ENCODE measurements at regions of chr18 and their contacts with region 1.

Region 1: GRCh38 chr18:58511897-58512581 is 116.9 kb downstream of the ALPK2 start:
- DNase-seq: no peak
- ATAC-seq: no peak
- H3K4me3 ChIP-seq: no peak overlapping the region
- H3K27ac ChIP-seq: no peak overlapping the region
- H3K4me1 ChIP-seq: no peaks in the 10 kb centered on the region
- H3K27me3 ChIP-seq: no peaks in the 10 kb centered on the region
- CTCF ChIP-seq: no peak
- POLR2A ChIP-seq: no peak

Region 2: DNA sequence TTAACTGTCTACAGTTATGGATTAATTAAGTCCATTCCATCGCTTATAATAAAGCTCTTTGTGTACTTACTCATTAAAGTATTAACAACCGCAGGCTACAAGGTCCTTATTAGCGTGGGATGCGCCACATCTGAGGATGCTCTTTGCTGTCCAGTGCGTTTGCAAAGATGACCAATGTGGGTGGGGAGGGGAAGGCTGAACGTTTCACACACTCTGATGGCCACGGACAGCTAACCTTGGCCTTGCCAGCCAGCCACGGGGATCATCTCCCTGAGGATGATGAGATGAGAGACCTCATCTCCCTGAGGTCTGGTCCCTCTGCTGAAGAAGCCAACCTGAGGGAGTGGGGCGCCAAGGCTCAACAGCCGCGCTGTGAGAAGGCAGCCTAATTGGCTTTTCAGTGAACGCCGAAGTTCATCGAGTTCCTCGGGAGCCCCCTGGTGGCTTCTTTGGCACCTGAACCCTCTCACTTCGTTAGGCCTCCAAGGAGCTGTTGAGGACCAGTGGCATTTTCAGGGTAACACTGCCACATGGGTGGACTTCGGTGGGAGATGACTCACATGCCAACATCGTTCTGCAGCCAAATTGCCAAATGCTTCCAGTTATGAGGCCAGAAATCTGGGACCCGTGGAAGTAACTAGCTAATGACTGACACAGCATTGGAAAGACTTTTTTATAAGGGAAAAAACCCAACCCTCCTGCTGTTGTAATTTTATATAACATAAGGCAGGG is 558.3 kb after region 1 on chr18:
- intact Hi-C with region 1: loop called in 2 of 10 experiments (anchors 5 to 10 kb)
- DNase-seq: peak; percentile 82 to 87 (median 82)
- ATAC-seq: peak; percentile 70 to 91 (median 88)
- H3K4me3 ChIP-seq: no peak overlapping the region
- H3K27ac ChIP-seq: no peak overlapping the region
- H3K4me1 ChIP-seq: no peaks in the 10 kb centered on the region
- H3K27me3 ChIP-seq: no peaks in the 10 kb centered on the region
- CTCF ChIP-seq: peak; percentile 81 to 94 (median 86)
- POLR2A ChIP-seq: no peak

Region 3: DNA sequence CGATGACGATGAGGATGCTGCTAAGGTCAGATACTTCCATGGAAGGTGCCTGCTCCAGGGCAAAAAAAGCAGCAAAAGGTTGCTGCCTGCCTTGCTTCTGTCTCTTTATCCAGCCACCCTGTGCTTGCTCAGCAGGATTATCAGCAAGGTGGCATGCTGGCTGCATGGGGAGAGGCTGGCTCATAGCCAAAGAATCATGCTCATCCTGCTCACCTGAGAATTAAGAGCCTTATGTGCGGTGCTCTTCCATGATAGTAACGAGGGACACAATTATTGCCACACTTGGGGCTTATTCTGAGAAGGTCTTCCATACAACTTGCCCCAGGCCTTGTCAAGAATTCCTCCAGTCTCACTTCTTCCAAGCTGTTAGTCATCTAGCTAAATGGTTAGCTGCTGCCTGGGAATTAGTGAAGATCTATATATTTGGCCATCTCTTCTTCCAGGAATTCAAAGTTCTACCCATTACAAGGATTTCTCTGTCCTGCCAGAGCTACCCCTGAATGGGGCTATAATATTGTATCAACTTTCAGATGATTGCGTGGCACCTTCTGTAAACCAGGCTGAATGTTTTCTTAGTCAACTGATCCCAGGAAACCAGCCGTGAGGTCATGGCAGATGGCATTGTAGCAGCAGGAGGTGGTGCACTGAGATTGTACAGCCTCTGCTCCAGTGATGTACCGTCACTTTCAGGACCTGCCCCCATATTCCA is 567.4 kb after region 1 on chr18:
- intact Hi-C with region 1: loop called in 2 of 10 experiments (anchors 5 to 10 kb)
- DNase-seq: no peak
- ATAC-seq: no peak
- H3K4me3 ChIP-seq: no peak overlapping the region
- H3K27ac ChIP-seq: no peak overlapping the region
- H3K4me1 ChIP-seq: peaks cover 0 to 9% (median 0%) of the 10 kb centered on the region in 12 donors
- H3K27me3 ChIP-seq: peaks cover 0 to 11% (median 0%) of the 10 kb centered on the region in 9 donors
- CTCF ChIP-seq: no peak
- POLR2A ChIP-seq: no peak